ENCODE measurements at regions of chr15 and their contacts with region 1.

Region 1: GRCh38 chr15:75029378-75030022 is 6.1 kb downstream of the PPCDC start:
- DNase-seq: peak; percentile 76 to 93 (median 87)
- ATAC-seq: peak; percentile 99
- H3K4me3 ChIP-seq: no peak overlapping the region
- H3K4me3 Mint-ChIP-seq: no peak overlapping the region
- H3K27ac ChIP-seq: no peak overlapping the region
- H3K27ac Mint-ChIP-seq: no peak overlapping the region
- H3K4me1 ChIP-seq: peaks cover 2% of the 10 kb centered on the region
- H3K4me1 Mint-ChIP-seq: peaks cover 10% of the 10 kb centered on the region
- H3K27me3 ChIP-seq: no peaks in the 10 kb centered on the region
- H3K27me3 Mint-ChIP-seq: no peaks in the 10 kb centered on the region
- CTCF ChIP-seq: peak; percentile 77

Region 2: GRCh38 chr15:74857082-74857655 is 172.3 kb before region 1 on chr15:
- CTCF ChIA-PET with region 1: no interaction called
- POLR2A ChIA-PET with region 1: no interaction called
- intact Hi-C with region 1: no loop called
- DNase-seq: no peak
- ATAC-seq: peak; percentile 40
- H3K4me3 ChIP-seq: no peak overlapping the region
- H3K4me3 Mint-ChIP-seq: no peak overlapping the region
- H3K27ac ChIP-seq: peak overlapping the region; percentile 9 to 31
- H3K27ac Mint-ChIP-seq: peak overlapping the region; percentile 72
- H3K4me1 ChIP-seq: peaks cover 35% of the 10 kb centered on the region
- H3K4me1 Mint-ChIP-seq: peaks cover 40% of the 10 kb centered on the region
- H3K27me3 ChIP-seq: no peaks in the 10 kb centered on the region
- H3K27me3 Mint-ChIP-seq: no peaks in the 10 kb centered on the region
- CTCF ChIP-seq: no peak

Region 3: DNA sequence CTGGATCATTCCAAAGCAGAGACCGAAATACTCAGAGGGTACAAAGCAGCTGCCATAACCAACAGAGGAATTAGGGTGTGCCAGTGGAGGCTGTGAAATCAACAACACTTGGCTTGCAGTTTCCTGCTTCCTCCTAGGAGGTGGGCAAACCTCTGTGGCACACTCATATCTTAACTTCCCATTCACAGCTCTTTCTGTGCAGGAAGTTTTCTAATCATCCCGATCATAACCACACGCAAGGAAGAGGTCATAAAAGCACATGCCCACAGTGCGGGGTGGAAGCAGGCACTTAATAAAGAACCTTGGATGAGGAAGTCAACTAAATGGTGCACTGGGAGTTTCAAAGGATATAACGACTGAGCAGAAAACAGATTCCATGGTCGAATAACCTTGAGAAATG is 161.4 kb before region 1 on chr15:
- CTCF ChIA-PET with region 1: no interaction called
- POLR2A ChIA-PET with region 1: no interaction called
- intact Hi-C with region 1: no loop called
- DNase-seq: peak in 1 of 9 experiments; percentile 50
- ATAC-seq: no peak
- H3K4me3 ChIP-seq: no peak overlapping the region
- H3K4me3 Mint-ChIP-seq: peak overlapping the region; percentile 60
- H3K27ac ChIP-seq: peak overlapping the region; percentile 20 to 75
- H3K27ac Mint-ChIP-seq: peak overlapping the region; percentile 83
- H3K4me1 ChIP-seq: peaks cover 83% of the 10 kb centered on the region
- H3K4me1 Mint-ChIP-seq: peaks cover 80% of the 10 kb centered on the region
- H3K27me3 ChIP-seq: no peaks in the 10 kb centered on the region
- H3K27me3 Mint-ChIP-seq: no peaks in the 10 kb centered on the region
- CTCF ChIP-seq: no peak

Region 4: GRCh38 chr15:75208501-75209288 is 179.2 kb after region 1 on chr15:
- CTCF ChIA-PET with region 1: interaction called, 114 read pairs
- POLR2A ChIA-PET with region 1: interaction called, 7 read pairs
- intact Hi-C with region 1: loop called in 1 of 2 experiments (anchors 1 kb)
- DNase-seq: peak in 1 of 9 experiments; percentile 5
- ATAC-seq: no peak
- H3K4me3 ChIP-seq: no peak overlapping the region
- H3K4me3 Mint-ChIP-seq: no peak overlapping the region
- H3K27ac ChIP-seq: no peak overlapping the region
- H3K27ac Mint-ChIP-seq: no peak overlapping the region
- H3K4me1 ChIP-seq: peaks cover 15% of the 10 kb centered on the region
- H3K4me1 Mint-ChIP-seq: peaks cover 39% of the 10 kb centered on the region
- H3K27me3 ChIP-seq: no peaks in the 10 kb centered on the region
- H3K27me3 Mint-ChIP-seq: no peaks in the 10 kb centered on the region
- CTCF ChIP-seq: no peak

Region 5: GRCh38 chr15:75302318-75302717 is 272.8 kb after region 1 on chr15:
- CTCF ChIA-PET with region 1: no interaction called
- POLR2A ChIA-PET with region 1: no interaction called
- intact Hi-C with region 1: loop called (anchors 5 kb)
- DNase-seq: no peak
- ATAC-seq: no peak
- H3K4me3 ChIP-seq: no peak overlapping the region
- H3K4me3 Mint-ChIP-seq: no peak overlapping the region
- H3K27ac ChIP-seq: no peak overlapping the region
- H3K27ac Mint-ChIP-seq: no peak overlapping the region
- H3K4me1 ChIP-seq: no peaks in the 10 kb centered on the region
- H3K4me1 Mint-ChIP-seq: no peaks in the 10 kb centered on the region
- H3K27me3 ChIP-seq: no peaks in the 10 kb centered on the region
- H3K27me3 Mint-ChIP-seq: peaks cover 8% of the 10 kb centered on the region
- CTCF ChIP-seq: no peak

Region 6: DNA sequence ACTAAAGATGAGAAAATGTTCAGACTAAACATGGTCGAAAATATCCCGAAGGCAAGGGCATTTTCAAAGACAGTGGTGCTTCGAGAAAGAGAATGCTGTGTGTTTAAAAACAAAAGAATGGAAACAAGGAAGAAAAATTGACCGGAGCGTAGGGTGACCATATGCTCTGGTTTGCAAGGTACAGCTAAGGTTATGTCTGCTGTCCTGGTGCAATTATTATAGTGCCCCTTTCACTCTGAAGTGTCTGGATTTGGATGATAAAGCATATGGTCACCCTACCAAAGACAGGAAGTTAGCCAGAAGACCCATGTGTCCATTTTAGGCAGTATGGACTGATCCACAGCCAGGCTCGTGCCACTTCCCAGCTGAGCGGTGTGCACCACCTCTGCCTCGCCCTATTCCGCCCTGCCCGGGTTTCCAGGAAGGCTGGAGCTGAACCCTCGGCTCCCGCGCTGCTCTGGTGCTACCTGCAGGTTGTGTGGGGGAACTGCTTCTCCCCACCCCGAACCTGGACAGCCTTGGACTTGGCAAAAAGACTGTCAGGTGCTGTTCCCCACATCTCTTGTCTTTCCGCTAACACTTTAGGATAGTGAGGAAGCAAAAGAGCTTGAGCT is 278.4 kb after region 1 on chr15:
- CTCF ChIA-PET with region 1: no interaction called
- POLR2A ChIA-PET with region 1: no interaction called
- intact Hi-C with region 1: loop called (anchors 5 kb)
- DNase-seq: no peak
- ATAC-seq: no peak
- H3K4me3 ChIP-seq: no peak overlapping the region
- H3K4me3 Mint-ChIP-seq: no peak overlapping the region
- H3K27ac ChIP-seq: no peak overlapping the region
- H3K27ac Mint-ChIP-seq: no peak overlapping the region
- H3K4me1 ChIP-seq: no peaks in the 10 kb centered on the region
- H3K4me1 Mint-ChIP-seq: no peaks in the 10 kb centered on the region
- H3K27me3 ChIP-seq: no peaks in the 10 kb centered on the region
- H3K27me3 Mint-ChIP-seq: peaks cover 17% of the 10 kb centered on the region
- CTCF ChIP-seq: peak; percentile 14

Region 7: DNA sequence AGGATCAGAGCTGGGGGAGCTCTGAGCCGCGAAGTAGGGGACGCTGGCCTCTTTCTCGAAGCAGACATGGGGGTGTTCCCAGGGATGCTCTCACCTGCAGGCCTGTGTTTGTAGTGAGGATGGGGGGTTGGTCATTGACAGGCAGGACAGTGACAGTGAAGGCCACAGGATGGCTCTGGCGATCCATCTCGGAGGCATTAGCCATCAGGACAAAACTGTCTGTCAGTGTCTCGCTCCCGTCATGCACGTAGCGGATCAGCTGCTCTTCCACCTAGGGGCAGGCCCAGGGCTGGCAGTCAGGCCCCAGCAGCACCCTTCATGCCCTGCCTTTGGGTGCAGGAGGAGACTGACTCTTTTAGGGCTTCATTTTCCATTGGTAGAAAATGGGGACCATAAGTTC is 655.1 kb after region 1 on chr15:
- CTCF ChIA-PET with region 1: no interaction called
- POLR2A ChIA-PET with region 1: no interaction called
- intact Hi-C with region 1: loop called in 1 of 2 experiments (anchors 5 kb)
- DNase-seq: no peak
- ATAC-seq: no peak
- H3K4me3 ChIP-seq: no peak overlapping the region
- H3K4me3 Mint-ChIP-seq: no peak overlapping the region
- H3K27ac ChIP-seq: no peak overlapping the region
- H3K27ac Mint-ChIP-seq: no peak overlapping the region
- H3K4me1 ChIP-seq: no peaks in the 10 kb centered on the region
- H3K4me1 Mint-ChIP-seq: peaks cover 2% of the 10 kb centered on the region
- H3K27me3 ChIP-seq: no peaks in the 10 kb centered on the region
- H3K27me3 Mint-ChIP-seq: no peaks in the 10 kb centered on the region
- CTCF ChIP-seq: no peak